Heart left ventricle (tissue), 16 donors: ENCODE measurements at regions of chr6 and their contacts with region 1.

Region 1: DNA sequence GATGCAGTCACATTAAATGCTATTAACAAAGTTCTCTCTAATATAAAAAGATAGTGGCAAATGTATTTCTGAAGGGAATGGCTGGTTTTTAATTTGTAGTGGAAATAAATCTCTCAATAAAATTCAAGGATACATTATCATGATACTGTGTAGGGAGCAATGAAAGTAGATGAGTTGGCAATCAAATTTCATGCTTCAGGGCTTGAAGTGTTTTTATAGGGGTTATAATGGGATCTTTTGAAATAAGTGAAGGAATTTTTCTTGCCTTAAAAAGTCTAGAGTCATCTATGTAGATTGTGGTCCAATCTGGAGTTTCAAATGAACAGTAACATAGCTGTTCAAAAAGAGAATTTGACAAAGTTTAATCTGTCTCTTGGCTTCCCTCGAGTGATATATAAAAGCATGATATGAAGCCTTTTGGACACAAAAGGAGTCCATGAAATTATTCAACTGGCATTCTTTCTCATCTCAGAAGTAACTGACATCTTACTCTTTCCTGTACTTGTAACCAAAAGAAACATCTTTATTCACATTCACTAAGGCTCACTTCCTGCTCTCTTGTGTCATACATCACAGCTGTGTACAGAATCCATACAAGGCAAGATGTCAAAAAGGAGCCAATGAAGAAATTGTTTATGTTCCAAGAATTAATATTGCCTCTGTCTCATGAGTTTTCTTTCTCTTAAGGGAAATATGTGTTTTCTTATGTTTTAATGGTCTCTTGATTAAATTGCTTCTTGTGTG is 591.0 kb upstream of the GJE1 start:
- DNase-seq: no peak
- ATAC-seq: no peak
- H3K4me3 ChIP-seq: no peak overlapping the region
- H3K27ac ChIP-seq: no peak overlapping the region
- H3K4me1 ChIP-seq: no peaks in the 10 kb centered on the region
- H3K27me3 ChIP-seq: no peaks in the 10 kb centered on the region
- CTCF ChIP-seq: no peak
- POLR2A ChIP-seq: no peak

Region 2: GRCh38 chr6:141483598-141484061 is 58.1 kb before region 1 on chr6:
- intact Hi-C with region 1: loop called in 1 of 10 experiments (anchors 10 kb)
- DNase-seq: peak in 3 of 5 donors; percentile 34 to 51 (median 41)
- ATAC-seq: peak; percentile 82 to 97 (median 97)
- H3K4me3 ChIP-seq: peak overlapping the region in 10 of 12 donors; percentile 9 to 45 (median 35)
- H3K27ac ChIP-seq: peak overlapping the region; percentile 38 to 87 (median 64)
- H3K4me1 ChIP-seq: peaks cover 0 to 37% (median 11%) of the 10 kb centered on the region in 12 donors
- H3K27me3 ChIP-seq: no peaks in the 10 kb centered on the region
- CTCF ChIP-seq: no peak
- POLR2A ChIP-seq: no peak